CD8-positive, alpha-beta T cell (primary cell): ENCODE measurements at regions of chr2 and their contacts with region 1.

Region 1: DNA sequence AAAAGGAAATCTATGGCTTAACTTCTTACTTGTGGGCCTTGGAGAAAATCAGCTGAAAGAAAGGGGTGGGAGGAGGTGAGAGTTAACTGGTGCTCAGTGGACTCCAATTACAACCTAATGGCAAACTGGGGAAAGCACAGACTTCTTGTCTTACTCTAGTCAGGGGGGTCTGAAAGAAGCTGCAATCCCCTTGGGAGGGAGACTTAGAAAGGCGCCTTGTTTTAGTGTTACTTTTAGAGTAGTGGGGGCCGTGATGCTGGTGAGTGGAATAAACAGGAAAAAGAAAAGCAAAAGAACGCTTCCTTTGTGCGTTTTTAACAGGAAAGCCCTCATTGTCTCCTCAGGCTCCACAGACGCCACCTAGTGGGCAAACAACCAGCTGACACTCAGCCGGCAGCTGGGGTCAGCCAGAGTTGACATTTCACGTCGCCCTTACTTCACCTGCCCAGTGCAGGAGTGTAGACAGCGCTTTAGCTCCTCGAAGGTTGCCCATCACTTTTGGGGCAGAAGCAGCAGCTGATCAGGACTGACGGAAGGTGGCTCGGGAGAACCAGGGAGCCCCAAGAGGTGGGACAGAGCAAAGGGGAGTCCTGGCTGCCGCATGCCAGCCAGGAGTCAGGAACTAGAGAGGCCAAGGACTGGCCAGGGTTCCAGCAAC is 55.9 kb upstream of the GORASP2 start:
- DNase-seq: peak; percentile 46 to 83 (median 72)
- ATAC-seq: peak; percentile 92
- H3K4me3 ChIP-seq: peak overlapping the region; percentile 32 to 48
- H3K4me3 Mint-ChIP-seq: peak overlapping the region; percentile 75
- H3K27ac ChIP-seq: no peak overlapping the region
- H3K27ac Mint-ChIP-seq: peak overlapping the region; percentile 53
- H3K4me1 ChIP-seq: peaks cover 10% of the 10 kb centered on the region
- H3K4me1 Mint-ChIP-seq: peaks cover 15% of the 10 kb centered on the region
- H3K27me3 ChIP-seq: no peaks in the 10 kb centered on the region
- H3K27me3 Mint-ChIP-seq: peaks cover 5% of the 10 kb centered on the region
- CTCF ChIP-seq: peak; percentile 80

Region 2: GRCh38 chr2:170235860-170236679 is 637.1 kb before region 1 on chr2:
- CTCF ChIA-PET with region 1: interaction called, 3 read pairs
- POLR2A ChIA-PET with region 1: no interaction called
- intact Hi-C with region 1: loop called in 1 of 2 experiments (anchors 5 kb)
- DNase-seq: peak in 2 of 9 experiments; percentile 16 to 38
- ATAC-seq: no peak
- H3K4me3 ChIP-seq: no peak overlapping the region
- H3K4me3 Mint-ChIP-seq: no peak overlapping the region
- H3K27ac ChIP-seq: no peak overlapping the region
- H3K27ac Mint-ChIP-seq: no peak overlapping the region
- H3K4me1 ChIP-seq: no peaks in the 10 kb centered on the region
- H3K4me1 Mint-ChIP-seq: no peaks in the 10 kb centered on the region
- H3K27me3 ChIP-seq: no peaks in the 10 kb centered on the region
- H3K27me3 Mint-ChIP-seq: peaks cover 18% of the 10 kb centered on the region
- CTCF ChIP-seq: no peak

Region 3: GRCh38 chr2:170361090-170361936 is 511.9 kb before region 1 on chr2:
- CTCF ChIA-PET with region 1: interaction called, 8 read pairs
- POLR2A ChIA-PET with region 1: no interaction called
- intact Hi-C with region 1: loop called in 1 of 2 experiments (anchors 2 kb)
- DNase-seq: peak; percentile 6 to 71 (median 42)
- ATAC-seq: peak; percentile 63
- H3K4me3 ChIP-seq: no peak overlapping the region
- H3K4me3 Mint-ChIP-seq: no peak overlapping the region
- H3K27ac ChIP-seq: no peak overlapping the region
- H3K27ac Mint-ChIP-seq: no peak overlapping the region
- H3K4me1 ChIP-seq: no peaks in the 10 kb centered on the region
- H3K4me1 Mint-ChIP-seq: peaks cover 7% of the 10 kb centered on the region
- H3K27me3 ChIP-seq: no peaks in the 10 kb centered on the region
- H3K27me3 Mint-ChIP-seq: peaks cover 14% of the 10 kb centered on the region
- CTCF ChIP-seq: peak; percentile 47

Region 4: DNA sequence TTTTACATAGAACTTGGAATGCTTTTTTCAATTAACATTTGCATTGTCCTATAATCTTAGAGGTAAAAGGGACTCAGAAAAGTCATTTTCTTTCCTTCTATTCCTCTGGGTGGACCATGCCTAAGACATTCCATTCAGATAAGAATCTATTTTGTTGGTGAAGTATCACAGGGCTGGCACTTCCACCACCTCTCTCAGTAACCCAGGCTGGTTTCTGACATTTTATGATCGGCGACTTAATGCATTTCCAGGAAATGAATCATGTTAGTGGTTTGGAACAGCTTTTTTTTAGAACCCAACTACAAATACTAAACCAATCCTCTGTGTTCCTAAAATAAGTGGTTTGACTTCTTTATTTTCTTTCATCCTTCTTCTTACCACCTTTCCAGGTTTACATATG is 29.5 kb before region 1 on chr2:
- CTCF ChIA-PET with region 1: interaction called, 10 read pairs
- POLR2A ChIA-PET with region 1: no interaction called
- intact Hi-C with region 1: no loop called
- DNase-seq: peak in 2 of 9 experiments; percentile 25 to 40
- ATAC-seq: no peak
- H3K4me3 ChIP-seq: no peak overlapping the region
- H3K4me3 Mint-ChIP-seq: no peak overlapping the region
- H3K27ac ChIP-seq: no peak overlapping the region
- H3K27ac Mint-ChIP-seq: no peak overlapping the region
- H3K4me1 ChIP-seq: peaks cover 10% of the 10 kb centered on the region
- H3K4me1 Mint-ChIP-seq: peaks cover 14% of the 10 kb centered on the region
- H3K27me3 ChIP-seq: no peaks in the 10 kb centered on the region
- H3K27me3 Mint-ChIP-seq: peaks cover 7% of the 10 kb centered on the region
- CTCF ChIP-seq: no peak

Region 5: GRCh38 chr2:170862286-170862902 is 10.8 kb before region 1 on chr2:
- CTCF ChIA-PET with region 1: interaction called, 18 read pairs
- POLR2A ChIA-PET with region 1: interaction called, 3 read pairs
- intact Hi-C with region 1: no loop called
- DNase-seq: no peak
- ATAC-seq: no peak
- H3K4me3 ChIP-seq: no peak overlapping the region
- H3K4me3 Mint-ChIP-seq: no peak overlapping the region
- H3K27ac ChIP-seq: no peak overlapping the region
- H3K27ac Mint-ChIP-seq: no peak overlapping the region
- H3K4me1 ChIP-seq: no peaks in the 10 kb centered on the region
- H3K4me1 Mint-ChIP-seq: no peaks in the 10 kb centered on the region
- H3K27me3 ChIP-seq: peaks cover 0 to 3% of the 10 kb centered on the region in 2 experiments
- H3K27me3 Mint-ChIP-seq: peaks cover 3% of the 10 kb centered on the region
- CTCF ChIP-seq: no peak